Right ventricle myocardium superior (tissue), 1 donor: ENCODE measurements at regions of chr7 and their contacts with region 1.

Region 1: GRCh38 chr7:31027161-31027965 is 24.7 kb upstream of the ADCYAP1R1 start:
- DNase-seq: peak; percentile 63
- ATAC-seq: peak; percentile 66

Region 2: DNA sequence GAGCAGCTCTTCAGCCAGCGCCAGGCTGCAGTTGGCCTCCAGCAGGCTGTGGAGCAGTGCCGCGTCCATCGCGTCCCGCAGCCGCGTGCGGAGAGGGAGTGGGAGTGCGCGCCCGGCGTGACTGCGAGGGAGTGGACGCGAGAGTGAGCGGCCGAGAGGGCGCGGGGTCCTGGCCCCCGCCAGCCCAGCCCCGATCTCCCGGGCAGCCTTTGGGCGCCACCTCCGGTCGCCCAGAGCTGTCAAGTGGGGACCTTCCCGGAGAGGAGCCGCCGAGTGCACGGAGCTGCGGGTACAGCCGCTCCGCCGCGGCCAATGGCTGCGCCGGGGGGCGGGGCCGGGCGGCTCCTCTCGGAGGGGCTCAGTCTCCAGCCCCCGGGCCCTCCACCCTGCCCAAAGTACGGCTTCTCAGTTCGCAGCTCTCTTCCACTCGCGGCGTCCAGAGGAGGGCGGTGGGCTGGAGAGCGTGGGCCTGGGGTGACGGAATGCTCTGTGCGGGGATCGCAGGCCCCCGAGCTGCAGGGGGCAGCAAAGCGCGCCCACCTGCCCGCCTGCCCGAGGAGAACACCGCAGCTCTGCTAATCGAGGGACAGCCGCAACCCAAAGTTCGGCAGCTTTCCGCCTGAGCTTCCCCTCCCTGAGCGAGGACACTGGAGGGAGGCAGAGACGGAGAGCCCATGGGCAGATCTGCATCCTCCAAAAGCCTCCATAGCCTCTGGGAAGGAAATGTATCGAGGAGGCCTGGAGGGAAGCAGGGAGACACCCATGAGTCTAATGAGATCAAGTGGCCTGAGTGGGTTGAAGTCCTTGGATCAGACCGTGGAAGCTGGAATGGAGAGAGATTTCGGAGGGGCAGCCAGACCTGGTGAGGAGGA is 344.9 kb before region 1 on chr7 and contains the start of gene CRHR2:
- intact Hi-C with region 1: no loop called
- DNase-seq: no peak
- ATAC-seq: peak; percentile 80
- total RNA-seq, gene CRHR2: 0.24 TPM

Region 3: DNA sequence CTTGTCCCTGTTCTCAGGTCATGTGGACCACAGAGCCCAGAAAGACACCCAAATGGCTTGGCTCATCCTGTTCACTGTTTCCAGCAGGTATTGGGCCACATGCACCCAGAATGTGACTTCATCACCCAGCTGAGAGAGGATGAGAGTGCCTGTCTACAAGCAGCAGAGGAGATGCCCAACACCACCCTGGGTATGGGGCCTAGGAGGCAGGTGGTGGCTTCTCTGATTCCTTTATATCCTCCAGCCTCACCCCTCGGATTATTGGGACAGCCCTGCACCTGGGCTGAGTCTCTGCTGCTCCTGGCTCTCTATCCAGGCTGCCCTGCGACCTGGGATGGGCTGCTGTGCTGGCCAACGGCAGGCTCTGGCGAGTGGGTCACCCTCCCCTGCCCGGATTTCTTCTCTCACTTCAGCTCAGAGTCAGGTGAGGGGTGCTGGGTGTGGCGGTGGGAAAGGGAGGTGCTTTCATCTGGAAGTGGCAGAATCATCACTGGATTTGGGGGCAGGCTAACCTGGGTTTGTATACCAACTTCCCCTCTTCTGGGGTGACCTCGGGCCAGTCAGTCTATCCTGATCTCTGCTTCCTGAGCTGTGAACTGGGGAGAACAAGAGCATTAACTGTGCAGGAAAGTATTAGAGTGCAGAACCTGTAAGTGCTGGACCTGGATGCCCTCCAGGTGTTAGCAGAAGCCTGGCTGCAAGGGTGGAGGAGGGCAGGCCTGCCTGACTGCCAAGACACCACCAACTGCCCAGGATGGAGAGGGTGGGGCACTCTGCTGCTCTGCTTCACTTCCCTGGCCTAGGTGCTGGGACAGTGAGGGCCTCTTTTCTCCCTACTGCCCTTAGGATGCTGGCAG is 58.4 kb before region 1 on chr7:
- intact Hi-C with region 1: loop called (anchors 10 kb)
- DNase-seq: no peak
- ATAC-seq: no peak